Left ventricle myocardium inferior (tissue), 1 donor: ENCODE measurements at regions of chr3 and their contacts with region 1.

Region 1: GRCh38 chr3:99499235-99500158 is 138.9 kb upstream of the COL8A1 start:
- DNase-seq: no peak
- H3K4me3 ChIP-seq: no peak overlapping the region
- H3K27ac ChIP-seq: peak overlapping the region; percentile 46
- H3K4me1 ChIP-seq: peaks cover 36% of the 10 kb centered on the region
- H3K27me3 ChIP-seq: no peaks in the 10 kb centered on the region
- CTCF ChIP-seq: peak; percentile 86

Region 2: GRCh38 chr3:99638167-99638948 is 138.9 kb after region 1 on chr3 and contains the start of gene COL8A1:
- intact Hi-C with region 1: no loop called
- DNase-seq: peak; percentile 67
- H3K4me3 ChIP-seq: peak within 1 kb of the TSS; percentile 70
- H3K27ac ChIP-seq: peak within 1 kb of the TSS; percentile 86
- H3K4me1 ChIP-seq: peaks cover 25% of the 10 kb centered on the region
- H3K27me3 ChIP-seq: peaks cover 56% of the 10 kb centered on the region
- CTCF ChIP-seq: no peak
- total RNA-seq, gene COL8A1: 16.4 TPM

Region 3: DNA sequence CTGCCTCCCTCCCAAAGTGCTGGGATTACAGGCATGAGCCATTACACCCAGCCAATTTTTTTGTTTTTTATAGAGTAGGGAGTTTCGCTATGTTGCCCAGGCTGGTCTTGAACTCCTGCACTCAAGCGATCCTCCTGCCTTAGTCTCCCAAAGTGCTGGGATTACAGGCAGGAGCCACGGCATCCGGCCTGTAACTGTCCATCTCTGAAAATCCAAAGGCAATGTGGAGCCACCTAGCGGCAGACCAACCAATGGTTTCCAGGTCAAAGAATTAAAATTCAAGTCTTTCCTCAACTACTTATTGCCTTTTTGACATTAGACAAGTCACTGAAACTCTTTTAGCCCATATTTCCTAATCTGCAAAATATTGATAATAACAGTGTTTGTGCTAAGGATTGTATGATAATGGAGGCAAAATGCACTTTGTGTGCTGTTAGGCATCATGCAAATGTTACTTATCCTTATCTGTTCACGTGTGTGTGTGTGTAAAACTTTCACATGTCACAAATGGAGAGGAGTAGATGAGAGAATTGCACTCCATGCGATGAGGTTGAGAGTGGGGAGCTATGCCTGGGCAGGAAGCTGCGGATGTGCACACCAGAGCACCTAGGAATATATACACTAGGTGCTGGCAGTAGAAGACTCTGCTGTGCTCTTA is 187.6 kb after region 1 on chr3:
- intact Hi-C with region 1: loop called (anchors 5 kb)
- DNase-seq: peak; percentile 40
- H3K4me3 ChIP-seq: no peak overlapping the region
- H3K27ac ChIP-seq: no peak overlapping the region
- H3K4me1 ChIP-seq: peaks cover 6% of the 10 kb centered on the region
- H3K27me3 ChIP-seq: no peaks in the 10 kb centered on the region
- CTCF ChIP-seq: peak; percentile 80